ENCODE measurements at regions of chr3 and their contacts with region 1.

Region 1: DNA sequence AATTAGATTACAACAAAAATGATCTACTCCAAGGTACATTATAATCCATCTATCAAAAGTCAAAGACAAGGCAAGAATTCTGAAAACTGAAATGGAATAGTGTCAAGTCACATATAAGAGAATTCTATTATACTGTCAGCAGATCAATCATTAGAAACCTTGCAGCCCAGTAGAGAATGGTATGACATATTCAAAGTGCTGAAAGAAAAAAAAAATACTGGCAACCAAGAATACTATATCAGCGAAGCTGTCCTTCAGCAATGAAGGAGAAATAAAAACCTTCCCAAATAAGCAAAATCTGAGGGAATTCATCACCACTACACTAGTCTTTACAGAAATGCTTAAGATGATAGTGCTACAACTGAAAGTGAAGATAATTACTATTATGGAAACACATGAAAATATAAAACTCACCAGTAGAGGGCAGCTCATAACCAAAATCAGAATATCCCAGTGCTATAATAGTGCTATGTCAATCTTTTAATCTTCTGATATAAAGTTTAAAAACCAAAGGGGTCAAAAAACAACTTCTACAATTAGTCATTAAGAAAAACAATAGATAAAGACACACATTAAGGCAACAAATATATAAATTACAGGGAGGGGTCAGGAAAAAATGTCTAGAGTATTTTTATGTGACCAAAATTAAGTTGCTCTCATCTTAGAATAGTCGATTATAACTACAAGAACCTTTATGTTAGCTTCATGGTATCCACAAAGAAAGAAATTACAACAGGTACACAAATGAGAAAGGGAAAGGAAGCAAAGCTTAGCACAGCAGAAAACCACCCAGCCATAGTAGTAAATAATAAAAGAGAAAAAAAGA is 190.7 kb upstream of the CNTN6 start:
- DNase-seq: peak; percentile 5
- H3K4me3 Mint-ChIP-seq: no peak overlapping the region
- H3K27ac Mint-ChIP-seq: no peak overlapping the region
- H3K4me1 Mint-ChIP-seq: no peaks in the 10 kb centered on the region
- H3K27me3 Mint-ChIP-seq: no peaks in the 10 kb centered on the region
- CTCF ChIP-seq: peak; percentile 15

Region 2: GRCh38 chr3:632572-633170 is 269.5 kb before region 1 on chr3:
- CTCF ChIA-PET with region 1: interaction called, 4 read pairs
- POLR2A ChIA-PET with region 1: no interaction called
- intact Hi-C with region 1: loop called (anchors 5 kb)
- DNase-seq: peak; percentile 58
- H3K4me3 Mint-ChIP-seq: no peak overlapping the region
- H3K27ac Mint-ChIP-seq: no peak overlapping the region
- H3K4me1 Mint-ChIP-seq: no peaks in the 10 kb centered on the region
- H3K27me3 Mint-ChIP-seq: peaks cover 32% of the 10 kb centered on the region
- CTCF ChIP-seq: peak; percentile 29

Region 3: DNA sequence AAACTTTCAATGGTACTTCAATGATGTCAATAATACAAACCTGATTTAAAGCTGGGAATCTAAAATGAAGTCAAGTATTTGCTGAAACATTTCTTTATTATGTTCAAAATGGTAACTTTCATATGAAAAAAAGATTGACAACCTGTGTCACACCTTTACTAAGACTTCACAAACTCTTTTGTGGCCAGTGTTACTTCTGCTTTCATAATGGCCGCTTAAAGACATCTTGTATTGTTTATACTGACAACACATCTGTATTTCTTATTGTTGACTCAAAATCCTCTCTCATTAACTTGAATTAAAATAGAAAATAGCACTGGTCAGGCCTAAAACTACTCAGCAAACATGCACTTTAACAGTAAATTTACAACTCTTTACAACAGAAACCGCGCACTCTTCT is 121.7 kb before region 1 on chr3:
- CTCF ChIA-PET with region 1: no interaction called
- POLR2A ChIA-PET with region 1: no interaction called
- intact Hi-C with region 1: no loop called
- DNase-seq: no peak
- H3K4me3 Mint-ChIP-seq: no peak overlapping the region
- H3K27ac Mint-ChIP-seq: no peak overlapping the region
- H3K4me1 Mint-ChIP-seq: no peaks in the 10 kb centered on the region
- H3K27me3 Mint-ChIP-seq: no peaks in the 10 kb centered on the region
- CTCF ChIP-seq: no peak

Region 4: GRCh38 chr3:988785-989184 is 86.6 kb after region 1 on chr3:
- CTCF ChIA-PET with region 1: no interaction called
- POLR2A ChIA-PET with region 1: no interaction called
- intact Hi-C with region 1: no loop called
- DNase-seq: no peak
- H3K4me3 Mint-ChIP-seq: no peak overlapping the region
- H3K27ac Mint-ChIP-seq: no peak overlapping the region
- H3K4me1 Mint-ChIP-seq: no peaks in the 10 kb centered on the region
- H3K27me3 Mint-ChIP-seq: no peaks in the 10 kb centered on the region
- CTCF ChIP-seq: no peak

Region 5: GRCh38 chr3:1082108-1082507 is 179.9 kb after region 1 on chr3:
- CTCF ChIA-PET with region 1: no interaction called
- POLR2A ChIA-PET with region 1: no interaction called
- intact Hi-C with region 1: loop called (anchors 2 kb)
- DNase-seq: peak; percentile 28
- H3K4me3 Mint-ChIP-seq: no peak overlapping the region
- H3K27ac Mint-ChIP-seq: no peak overlapping the region
- H3K4me1 Mint-ChIP-seq: no peaks in the 10 kb centered on the region
- H3K27me3 Mint-ChIP-seq: no peaks in the 10 kb centered on the region
- CTCF ChIP-seq: peak; percentile 46

Region 6: DNA sequence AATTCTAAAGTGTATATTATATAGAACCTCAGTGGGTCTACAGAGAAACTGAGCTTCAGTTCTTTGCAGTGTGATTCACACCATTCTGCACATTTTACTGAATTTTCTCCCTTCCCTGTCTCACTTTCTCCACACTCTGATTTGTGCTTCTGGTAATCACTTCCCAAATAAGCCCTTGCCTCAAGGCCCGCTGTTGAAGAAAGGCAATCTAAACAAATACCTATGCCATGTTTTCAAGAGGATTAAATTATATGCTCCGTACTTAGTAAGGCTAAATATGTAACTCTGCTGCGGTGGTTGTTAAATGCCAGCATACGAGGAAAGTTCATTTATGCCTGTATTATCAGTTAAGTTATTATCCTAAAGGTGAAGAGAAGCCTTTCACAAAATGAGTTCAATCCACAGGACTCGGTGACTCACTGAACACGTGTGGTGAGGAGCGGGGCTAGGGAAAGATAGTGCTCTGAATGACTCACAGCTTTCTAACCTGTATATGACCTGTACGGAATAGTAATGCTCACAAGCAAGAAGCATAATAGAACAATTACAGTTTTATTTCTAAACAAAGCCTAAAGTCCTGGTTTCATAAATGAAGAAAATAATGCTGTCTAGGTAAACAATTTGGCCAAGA is 215.8 kb after region 1 on chr3:
- CTCF ChIA-PET with region 1: no interaction called
- POLR2A ChIA-PET with region 1: no interaction called
- intact Hi-C with region 1: no loop called
- DNase-seq: peak; percentile 48
- H3K4me3 Mint-ChIP-seq: no peak overlapping the region
- H3K27ac Mint-ChIP-seq: no peak overlapping the region
- H3K4me1 Mint-ChIP-seq: no peaks in the 10 kb centered on the region
- H3K27me3 Mint-ChIP-seq: no peaks in the 10 kb centered on the region
- CTCF ChIP-seq: no peak